GM12878 (cell line): ENCODE measurements at regions of chr5 and their contacts with region 1.

Region 1: GRCh38 chr5:35182541-35183535 is 47.4 kb downstream of the PRLR start:
- DNase-seq: peak; percentile 27
- ATAC-seq: peak; percentile 91
- H3K4me3 ChIP-seq: no peak overlapping the region
- H3K27ac ChIP-seq: no peak overlapping the region
- H3K4me1 ChIP-seq: no peaks in the 10 kb centered on the region
- H3K27me3 ChIP-seq: no peaks in the 10 kb centered on the region
- CTCF ChIP-seq: peak; percentile 59 to 69 (median 63)
- EP300 ChIP-seq: no peak
- POLR2A ChIP-seq: no peak
- RAD21 ChIP-seq: peak; percentile 62

Region 2: GRCh38 chr5:35089334-35090314 is 93.2 kb before region 1 on chr5:
- CTCF ChIA-PET with region 1: interaction called, 91 read pairs
- POLR2A ChIA-PET with region 1: no interaction called
- RAD21 ChIA-PET with region 1: interaction called, 7 read pairs
- SMC1A ChIA-PET with region 1: interaction called, 33 read pairs
- in situ Hi-C with region 1: loop called (anchors 5 kb)
- intact Hi-C with region 1: loop called (anchors 1 kb)
- DNase-seq: peak; percentile 28
- ATAC-seq: peak; percentile 92
- H3K4me3 ChIP-seq: no peak overlapping the region
- H3K27ac ChIP-seq: no peak overlapping the region
- H3K4me1 ChIP-seq: no peaks in the 10 kb centered on the region
- H3K27me3 ChIP-seq: no peaks in the 10 kb centered on the region
- CTCF ChIP-seq: peak; percentile 75 to 90 (median 78); a peak in 5 of 6 replicates
- EP300 ChIP-seq: no peak
- POLR2A ChIP-seq: no peak
- RAD21 ChIP-seq: peak; percentile 94

Region 3: DNA sequence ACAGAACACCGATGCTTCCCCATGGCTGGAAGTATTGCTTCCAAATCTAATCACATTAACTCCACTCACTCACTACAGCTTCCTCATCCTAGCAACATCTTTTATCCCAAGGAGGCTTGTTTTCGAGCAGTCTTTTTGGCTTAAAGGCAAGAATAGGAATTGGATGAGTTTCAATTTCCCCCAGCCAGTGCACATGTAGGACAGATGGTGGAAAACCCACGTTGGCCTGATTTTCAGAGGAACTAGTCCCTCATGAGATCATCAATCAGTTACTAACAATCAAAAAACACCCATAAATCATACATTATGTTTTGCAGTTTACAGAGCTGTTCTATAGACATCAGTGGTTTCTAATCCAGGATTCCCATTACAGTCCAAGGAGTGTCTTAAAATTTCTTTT is 86.6 kb before region 1 on chr5:
- CTCF ChIA-PET with region 1: interaction called, 91 read pairs
- POLR2A ChIA-PET with region 1: no interaction called
- RAD21 ChIA-PET with region 1: interaction called, 3 read pairs
- SMC1A ChIA-PET with region 1: interaction called, 33 read pairs
- in situ Hi-C with region 1: loop called (anchors 5 kb)
- intact Hi-C with region 1: no loop called
- DNase-seq: no peak
- ATAC-seq: peak; percentile 12; the same call in 2 of the 3 replicates
- H3K4me3 ChIP-seq: no peak overlapping the region
- H3K27ac ChIP-seq: no peak overlapping the region
- H3K4me1 ChIP-seq: no peaks in the 10 kb centered on the region
- H3K27me3 ChIP-seq: no peaks in the 10 kb centered on the region
- CTCF ChIP-seq: no peak
- EP300 ChIP-seq: no peak
- POLR2A ChIP-seq: no peak
- RAD21 ChIP-seq: no peak

Region 4: GRCh38 chr5:35171078-35171477 is 11.8 kb before region 1 on chr5:
- CTCF ChIA-PET with region 1: interaction called, 14 read pairs
- POLR2A ChIA-PET with region 1: no interaction called
- RAD21 ChIA-PET with region 1: no interaction called
- SMC1A ChIA-PET with region 1: interaction called, 6 read pairs
- in situ Hi-C with region 1: no loop called
- intact Hi-C with region 1: no loop called
- DNase-seq: no peak
- ATAC-seq: no peak
- H3K4me3 ChIP-seq: no peak overlapping the region
- H3K27ac ChIP-seq: no peak overlapping the region
- H3K4me1 ChIP-seq: no peaks in the 10 kb centered on the region
- H3K27me3 ChIP-seq: no peaks in the 10 kb centered on the region
- CTCF ChIP-seq: no peak
- EP300 ChIP-seq: no peak
- POLR2A ChIP-seq: no peak
- RAD21 ChIP-seq: no peak

Region 5: GRCh38 chr5:35194635-35195471 is 12.0 kb after region 1 on chr5:
- CTCF ChIA-PET with region 1: interaction called, 33 read pairs
- POLR2A ChIA-PET with region 1: no interaction called
- RAD21 ChIA-PET with region 1: interaction called, 7 read pairs
- SMC1A ChIA-PET with region 1: interaction called, 7 read pairs
- in situ Hi-C with region 1: no loop called
- intact Hi-C with region 1: no loop called
- DNase-seq: peak; percentile 36
- ATAC-seq: peak; percentile 96
- H3K4me3 ChIP-seq: peak overlapping the region; percentile 20; the same call in 1 of the 2 replicates
- H3K27ac ChIP-seq: peak overlapping the region; percentile 30; the same call in 1 of the 2 replicates
- H3K4me1 ChIP-seq: peaks cover 15% of the 10 kb centered on the region
- H3K27me3 ChIP-seq: no peaks in the 10 kb centered on the region
- CTCF ChIP-seq: no peak
- EP300 ChIP-seq: peak in 1 of 2 experiments; percentile 79; a peak in 2 of 4 replicates
- POLR2A ChIP-seq: no peak
- RAD21 ChIP-seq: no peak

Region 6: DNA sequence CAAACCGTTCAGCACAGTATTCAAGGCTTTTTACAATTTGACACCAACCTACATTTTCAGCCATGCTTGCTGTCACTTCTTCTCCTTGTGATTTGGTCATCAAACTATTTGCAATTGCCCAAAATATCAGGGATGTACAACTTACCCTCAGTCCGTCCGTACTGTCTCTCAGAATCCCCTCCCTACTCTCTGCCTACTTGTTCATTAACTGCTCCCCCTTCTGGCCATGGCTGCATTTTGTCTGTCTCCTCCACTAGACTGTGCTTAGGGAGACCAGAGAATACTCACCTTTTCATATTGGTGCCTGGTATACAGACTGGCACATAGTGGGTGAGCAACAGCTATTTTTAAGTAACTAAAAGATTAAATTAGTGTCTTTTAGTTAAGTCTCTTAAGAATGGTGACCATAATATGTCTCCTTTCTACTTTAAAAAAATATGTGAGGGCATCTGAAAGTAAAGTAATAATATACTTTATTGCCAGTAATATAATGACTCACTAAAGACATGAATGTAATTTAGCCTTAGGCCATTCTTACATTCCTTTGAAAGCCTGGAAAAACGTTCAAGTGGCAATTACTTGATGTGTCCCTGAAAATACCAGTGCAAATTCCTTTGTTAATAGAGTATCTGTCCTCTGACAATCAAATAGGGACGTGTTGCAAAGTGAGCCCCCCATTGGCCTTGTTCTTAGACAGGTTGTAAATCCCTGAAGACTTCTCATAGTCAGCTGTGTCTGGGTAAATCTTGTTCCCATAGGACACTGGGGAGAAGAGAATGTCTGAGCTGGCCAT is 19.7 kb after region 1 on chr5:
- CTCF ChIA-PET with region 1: interaction called, 19 read pairs
- POLR2A ChIA-PET with region 1: interaction called, 5 read pairs
- RAD21 ChIA-PET with region 1: interaction called, 6 read pairs
- SMC1A ChIA-PET with region 1: interaction called, 7 read pairs
- in situ Hi-C with region 1: no loop called
- intact Hi-C with region 1: no loop called
- DNase-seq: no peak
- ATAC-seq: peak; percentile 88
- H3K4me3 ChIP-seq: no peak overlapping the region
- H3K27ac ChIP-seq: no peak overlapping the region
- H3K4me1 ChIP-seq: no peaks in the 10 kb centered on the region
- H3K27me3 ChIP-seq: no peaks in the 10 kb centered on the region
- CTCF ChIP-seq: peak; percentile 35 to 48 (median 45); a peak in 5 of 6 replicates
- EP300 ChIP-seq: no peak
- POLR2A ChIP-seq: no peak
- RAD21 ChIP-seq: peak; percentile 44

Region 7: DNA sequence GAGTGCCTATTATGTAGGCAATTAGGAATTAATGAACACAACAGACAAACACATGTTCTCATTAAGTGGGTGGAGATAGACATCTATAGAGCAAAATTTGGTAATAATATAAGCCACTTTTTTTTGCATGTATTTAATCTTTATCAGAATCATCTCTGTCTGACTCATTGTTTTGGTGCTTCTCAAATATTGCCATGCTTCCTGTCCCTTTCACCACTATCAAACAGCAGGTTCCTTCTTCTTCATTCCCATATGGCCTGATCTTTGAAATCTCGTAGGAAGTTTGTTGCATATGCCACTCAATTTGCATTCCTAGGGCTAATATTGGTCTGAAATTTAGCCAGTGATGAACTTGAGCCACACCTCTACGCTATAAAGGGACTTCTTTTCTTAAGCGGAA is 306.0 kb after region 1 on chr5:
- CTCF ChIA-PET with region 1: no interaction called
- POLR2A ChIA-PET with region 1: no interaction called
- RAD21 ChIA-PET with region 1: no interaction called
- SMC1A ChIA-PET with region 1: no interaction called
- in situ Hi-C with region 1: no loop called
- intact Hi-C with region 1: no loop called
- DNase-seq: no peak
- ATAC-seq: no peak
- H3K4me3 ChIP-seq: no peak overlapping the region
- H3K27ac ChIP-seq: no peak overlapping the region
- H3K4me1 ChIP-seq: no peaks in the 10 kb centered on the region
- H3K27me3 ChIP-seq: no peaks in the 10 kb centered on the region
- CTCF ChIP-seq: no peak
- EP300 ChIP-seq: no peak
- POLR2A ChIP-seq: no peak
- RAD21 ChIP-seq: no peak